ENCODE measurements at regions of chr14 and their contacts with region 1.

Region 1: GRCh38 chr14:21455911-21456667 is at the start of gene CHD8:
- DNase-seq: peak; percentile 95 to 100 (median 100)
- ATAC-seq: peak; percentile 98
- H3K4me3 ChIP-seq: peak within 1 kb of the TSS; percentile 91
- H3K4me3 Mint-ChIP-seq: peak within 1 kb of the TSS; percentile 89 to 100 (median 98)
- H3K27ac ChIP-seq: peak within 1 kb of the TSS; percentile 94
- H3K27ac Mint-ChIP-seq: peak within 1 kb of the TSS; percentile 96 to 100 (median 99)
- H3K4me1 ChIP-seq: peaks cover 17 to 21% of the 10 kb centered on the region in 2 donors
- H3K4me1 Mint-ChIP-seq: peaks cover 18 to 48% (median 41%) of the 10 kb centered on the region in 7 donors
- H3K27me3 ChIP-seq: no peaks in the 10 kb centered on the region
- H3K27me3 Mint-ChIP-seq: no peaks in the 10 kb centered on the region
- total RNA-seq, gene CHD8: 125 to 143 (median 133) TPM

Region 2: DNA sequence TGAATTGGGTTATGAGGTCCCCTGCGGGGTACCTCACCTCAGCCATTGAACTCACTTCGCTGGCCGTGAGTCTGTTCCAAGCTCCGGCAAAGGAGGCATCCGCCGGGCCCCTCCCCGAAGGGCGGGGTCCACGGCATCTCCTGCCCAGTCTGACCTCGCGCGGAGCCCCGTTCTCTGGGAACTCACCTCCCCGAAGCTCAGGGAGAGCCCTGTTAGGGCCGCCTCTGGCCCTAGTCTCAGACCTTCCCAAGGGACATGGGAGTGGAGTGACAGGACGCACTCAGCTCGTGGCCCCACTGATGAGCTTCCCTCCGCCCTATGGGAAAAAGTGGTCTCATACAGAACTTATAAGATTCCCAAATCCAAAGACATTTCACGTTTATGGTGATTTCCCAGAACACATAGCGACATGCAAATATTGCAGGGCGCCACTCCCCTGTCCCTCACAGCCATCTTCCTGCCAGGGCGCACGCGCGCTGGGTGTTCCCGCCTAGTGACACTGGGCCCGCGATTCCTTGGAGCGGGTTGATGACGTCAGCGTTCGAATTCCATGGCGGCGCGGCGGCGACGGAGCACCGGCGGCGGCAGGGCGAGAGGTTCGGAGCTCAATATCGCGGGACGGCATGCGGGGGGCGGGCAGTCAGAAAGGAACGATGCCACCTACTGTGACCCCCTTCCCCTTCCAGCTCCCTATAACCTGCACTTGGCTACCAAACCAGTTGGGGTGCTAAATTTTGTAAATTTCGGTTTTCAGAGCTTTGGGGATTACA is 1112.8 kb before region 1 on chr14 and contains the start of gene PARP2:
- CTCF ChIA-PET with region 1: no interaction called
- POLR2A ChIA-PET with region 1: no interaction called
- intact Hi-C with region 1: loop called in 1 of 2 experiments (anchors 1 kb)
- DNase-seq: peak; percentile 82 to 94 (median 93)
- ATAC-seq: peak; percentile 86
- H3K4me3 ChIP-seq: peak within 1 kb of the TSS; percentile 74
- H3K4me3 Mint-ChIP-seq: peak within 1 kb of the TSS; percentile 82 to 99 (median 95)
- H3K27ac ChIP-seq: peak within 1 kb of the TSS; percentile 91
- H3K27ac Mint-ChIP-seq: peak within 1 kb of the TSS; percentile 91 to 98 (median 97)
- H3K4me1 ChIP-seq: peaks cover 4 to 5% of the 10 kb centered on the region in 2 donors
- H3K4me1 Mint-ChIP-seq: peaks cover 6 to 27% (median 18%) of the 10 kb centered on the region in 7 donors
- H3K27me3 ChIP-seq: no peaks in the 10 kb centered on the region
- H3K27me3 Mint-ChIP-seq: peaks cover 0 to 7% (median 0%) of the 10 kb centered on the region in 5 donors
- total RNA-seq, gene PARP2: 15.3 to 24.5 (median 21.3) TPM

Region 3: DNA sequence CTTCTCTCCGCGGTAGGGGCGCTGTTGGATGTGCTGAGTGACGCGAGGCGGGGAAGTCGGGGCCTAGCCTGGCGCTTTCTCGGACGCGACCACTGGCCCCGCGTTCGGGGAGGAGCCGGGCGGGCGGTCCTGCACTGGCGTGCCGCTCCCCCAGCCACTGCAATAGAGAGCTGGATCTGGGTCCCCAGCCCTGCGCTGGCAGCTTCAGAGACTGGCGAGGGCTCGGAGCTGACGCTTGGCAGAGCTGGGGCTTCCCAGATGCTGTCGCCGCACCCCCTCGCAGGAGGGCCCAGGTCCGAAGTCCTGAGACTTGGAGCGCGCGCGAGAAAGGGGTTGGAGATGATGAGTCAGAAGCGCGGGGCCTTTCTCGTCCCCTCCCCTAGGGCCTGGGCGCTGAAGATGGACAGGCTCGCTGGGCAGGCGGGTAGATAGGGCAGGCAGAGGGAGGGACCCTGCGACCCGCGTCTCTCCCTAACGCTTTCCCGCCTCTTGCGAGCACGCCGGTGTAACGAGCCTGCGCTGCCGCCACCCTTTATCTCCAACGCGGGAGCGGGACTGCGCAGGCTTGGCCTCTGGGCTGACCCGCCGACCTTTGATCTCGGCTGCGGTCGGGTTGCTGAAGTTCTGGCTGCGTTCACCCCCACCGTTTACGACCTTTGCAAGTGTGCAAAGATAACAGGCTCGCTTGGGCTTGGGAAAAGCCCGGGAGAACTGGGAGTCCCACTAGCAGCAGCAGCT is 352.2 kb before region 1 on chr14:
- CTCF ChIA-PET with region 1: no interaction called
- POLR2A ChIA-PET with region 1: no interaction called
- intact Hi-C with region 1: loop called (anchors 1 to 5 kb)
- DNase-seq: peak; percentile 87 to 94 (median 92)
- ATAC-seq: peak; percentile 92
- H3K4me3 ChIP-seq: peak overlapping the region; percentile 94
- H3K4me3 Mint-ChIP-seq: peak overlapping the region; percentile 74 to 99 (median 91)
- H3K27ac ChIP-seq: peak overlapping the region; percentile 96
- H3K27ac Mint-ChIP-seq: peak overlapping the region; percentile 25 to 97 (median 89)
- H3K4me1 ChIP-seq: peaks cover 3 to 8% of the 10 kb centered on the region in 2 donors
- H3K4me1 Mint-ChIP-seq: peaks cover 23 to 41% (median 26%) of the 10 kb centered on the region in 7 donors
- H3K27me3 ChIP-seq: peaks cover 0 to 4% of the 10 kb centered on the region in 2 donors
- H3K27me3 Mint-ChIP-seq: peaks cover 0 to 11% (median 0%) of the 10 kb centered on the region in 5 donors

Region 4: GRCh38 chr14:21437063-21437901 is 18.8 kb before region 1 on chr14:
- CTCF ChIA-PET with region 1: interaction called, 18 read pairs
- POLR2A ChIA-PET with region 1: interaction called, 123 read pairs
- intact Hi-C with region 1: loop called (anchors 1 kb)
- DNase-seq: peak; percentile 93 to 100 (median 99)
- ATAC-seq: peak; percentile 100
- H3K4me3 ChIP-seq: peak overlapping the region; percentile 87
- H3K4me3 Mint-ChIP-seq: peak overlapping the region; percentile 86 to 97 (median 92)
- H3K27ac ChIP-seq: peak overlapping the region; percentile 94
- H3K27ac Mint-ChIP-seq: peak overlapping the region; percentile 90 to 98 (median 94)
- H3K4me1 ChIP-seq: peaks cover 13 to 22% of the 10 kb centered on the region in 2 donors
- H3K4me1 Mint-ChIP-seq: peaks cover 43 to 86% (median 68%) of the 10 kb centered on the region in 7 donors
- H3K27me3 ChIP-seq: no peaks in the 10 kb centered on the region
- H3K27me3 Mint-ChIP-seq: no peaks in the 10 kb centered on the region

Region 5: DNA sequence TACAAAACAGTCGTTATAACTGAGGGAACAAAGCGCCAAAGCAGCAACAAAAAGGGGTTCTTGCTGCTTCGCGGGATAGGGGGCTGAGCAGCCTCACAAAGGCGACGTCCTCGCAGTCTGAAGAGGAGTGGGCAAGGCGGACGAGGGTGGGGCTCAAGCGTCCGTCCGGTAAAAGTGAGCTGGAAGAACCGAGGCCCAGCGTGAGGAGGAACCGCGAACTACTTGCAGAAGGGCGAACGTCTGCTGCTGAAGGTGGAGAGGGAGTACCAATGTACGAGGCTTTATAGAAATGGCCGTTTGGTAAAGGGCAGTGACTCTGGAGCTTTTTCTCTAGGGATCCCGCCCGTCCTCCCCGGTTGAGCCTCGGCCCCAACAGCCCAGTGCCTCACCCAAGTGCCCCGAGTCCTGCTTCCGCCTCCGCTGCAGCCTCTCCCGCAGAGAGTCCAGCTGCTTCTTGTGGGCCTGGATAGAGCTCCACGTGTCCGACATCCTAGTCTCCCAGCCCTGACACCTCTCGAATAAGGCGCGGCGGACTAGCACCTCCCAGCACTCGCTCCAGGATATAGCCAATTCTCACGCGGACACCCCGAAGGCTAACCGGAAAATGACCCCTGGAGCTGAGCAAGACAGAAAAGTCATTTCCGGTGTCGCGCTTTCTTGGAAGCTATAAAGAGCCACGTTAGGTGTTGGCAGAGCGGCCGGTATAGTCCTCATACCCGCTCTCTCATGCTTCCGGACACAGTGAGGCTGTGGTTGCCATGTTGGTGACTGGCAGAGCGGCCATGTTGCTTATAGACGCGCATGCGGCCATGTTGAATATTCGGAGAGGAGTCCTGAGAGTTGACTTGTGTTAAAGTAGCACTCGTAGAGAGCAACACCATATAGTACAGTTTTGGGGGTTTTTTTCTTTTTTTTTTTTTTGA is 54.9 kb after region 1 on chr14 and contains the start of gene METTL3:
- CTCF ChIA-PET with region 1: interaction called, 6 read pairs
- POLR2A ChIA-PET with region 1: interaction called, 15 read pairs
- intact Hi-C with region 1: loop called (anchors 1 kb)
- DNase-seq: peak; percentile 78 to 95 (median 90)
- ATAC-seq: peak; percentile 100
- H3K4me3 ChIP-seq: peak within 1 kb of the TSS; percentile 94
- H3K4me3 Mint-ChIP-seq: peak within 1 kb of the TSS; percentile 92 to 100 (median 99)
- H3K27ac ChIP-seq: peak within 1 kb of the TSS; percentile 87
- H3K27ac Mint-ChIP-seq: peak within 1 kb of the TSS; percentile 97 to 99 (median 98)
- H3K4me1 ChIP-seq: peaks cover 15 to 21% of the 10 kb centered on the region in 2 donors
- H3K4me1 Mint-ChIP-seq: peaks cover 20 to 47% (median 42%) of the 10 kb centered on the region in 7 donors
- H3K27me3 ChIP-seq: no peaks in the 10 kb centered on the region
- H3K27me3 Mint-ChIP-seq: peaks cover 0 to 1% (median 0%) of the 10 kb centered on the region in 5 donors
- total RNA-seq, gene METTL3: 43.6 to 108 (median 75.3) TPM

Region 6: GRCh38 chr14:22589096-22589839 is 1133.2 kb after region 1 on chr14 and contains the start of gene DAD1:
- CTCF ChIA-PET with region 1: no interaction called
- POLR2A ChIA-PET with region 1: no interaction called
- intact Hi-C with region 1: loop called in 1 of 2 experiments (anchors 5 kb)
- DNase-seq: peak; percentile 100
- ATAC-seq: peak; percentile 94
- H3K4me3 ChIP-seq: peak within 1 kb of the TSS; percentile 81
- H3K4me3 Mint-ChIP-seq: peak within 1 kb of the TSS; percentile 83 to 99 (median 96)
- H3K27ac ChIP-seq: peak within 1 kb of the TSS; percentile 96
- H3K27ac Mint-ChIP-seq: peak within 1 kb of the TSS; percentile 90 to 100 (median 99)
- H3K4me1 ChIP-seq: peaks cover 30 to 38% of the 10 kb centered on the region in 2 donors
- H3K4me1 Mint-ChIP-seq: peaks cover 34 to 62% (median 53%) of the 10 kb centered on the region in 7 donors
- H3K27me3 ChIP-seq: no peaks in the 10 kb centered on the region
- H3K27me3 Mint-ChIP-seq: peaks cover 0 to 17% (median 0%) of the 10 kb centered on the region in 5 donors
- total RNA-seq, gene DAD1: 68.8 to 157 (median 117) TPM

Measured in naive thymus-derived CD4-positive, alpha-beta T cell (primary cell).